Activated naive CD4-positive, alpha-beta T cell treated with anti-CD3 and anti-CD28 coated beads for 36 hours (primary cell): ENCODE measurements at regions of chr9 and their contacts with region 1.

Region 1: GRCh38 chr9:73132034-73132776 is 19.5 kb upstream of the ANXA1 start:
- DNase-seq: peak; percentile 76
- H3K4me3 Mint-ChIP-seq: peak overlapping the region; percentile 79
- H3K27ac Mint-ChIP-seq: peak overlapping the region; percentile 86
- H3K4me1 Mint-ChIP-seq: peaks cover 25% of the 10 kb centered on the region
- H3K27me3 Mint-ChIP-seq: no peaks in the 10 kb centered on the region

Region 2: GRCh38 chr9:72440992-72441847 is 691.0 kb before region 1 on chr9:
- CTCF ChIA-PET with region 1: no interaction called
- intact Hi-C with region 1: no loop called
- DNase-seq: no peak
- H3K4me3 Mint-ChIP-seq: no peak overlapping the region
- H3K27ac Mint-ChIP-seq: no peak overlapping the region
- H3K4me1 Mint-ChIP-seq: peaks cover 14% of the 10 kb centered on the region
- H3K27me3 Mint-ChIP-seq: no peaks in the 10 kb centered on the region

Region 3: DNA sequence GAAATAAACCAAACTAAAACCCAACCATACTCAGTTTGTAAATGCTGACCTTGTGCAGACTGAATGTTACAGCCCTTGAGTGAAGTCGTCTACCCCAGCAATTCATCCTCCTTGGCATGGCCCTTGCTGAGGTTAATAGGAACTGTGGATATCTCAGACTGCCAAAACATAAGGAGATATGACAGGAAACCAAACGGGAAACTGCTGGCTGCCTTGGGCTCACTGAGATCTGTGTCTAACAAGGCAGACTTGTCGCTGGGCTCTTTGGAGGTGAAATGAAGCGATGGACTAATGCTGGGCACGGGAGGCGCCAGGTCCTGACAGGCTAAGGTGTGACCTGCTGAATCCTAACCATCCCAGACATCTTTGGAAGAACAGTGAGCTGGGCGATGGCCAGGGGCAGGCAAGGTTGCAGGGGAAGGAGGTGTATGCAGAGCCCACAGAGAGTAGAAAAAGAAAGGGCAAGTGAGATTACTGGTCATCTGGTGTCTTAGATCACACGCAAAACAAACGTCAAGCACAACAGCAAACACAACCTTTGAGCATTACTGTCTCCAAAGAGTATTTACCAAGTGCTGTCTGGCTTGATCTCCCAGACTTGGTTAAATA is 134.7 kb before region 1 on chr9:
- CTCF ChIA-PET with region 1: no interaction called
- intact Hi-C with region 1: no loop called
- DNase-seq: no peak
- H3K4me3 Mint-ChIP-seq: no peak overlapping the region
- H3K27ac Mint-ChIP-seq: no peak overlapping the region
- H3K4me1 Mint-ChIP-seq: no peaks in the 10 kb centered on the region
- H3K27me3 Mint-ChIP-seq: peaks cover 18% of the 10 kb centered on the region

Region 4: GRCh38 chr9:73118898-73119554 is 13.2 kb before region 1 on chr9:
- CTCF ChIA-PET with region 1: interaction called, 3 read pairs
- intact Hi-C with region 1: loop called (anchors 1 kb)
- DNase-seq: no peak
- H3K4me3 Mint-ChIP-seq: no peak overlapping the region
- H3K27ac Mint-ChIP-seq: no peak overlapping the region
- H3K4me1 Mint-ChIP-seq: peaks cover 34% of the 10 kb centered on the region
- H3K27me3 Mint-ChIP-seq: no peaks in the 10 kb centered on the region

Region 5: DNA sequence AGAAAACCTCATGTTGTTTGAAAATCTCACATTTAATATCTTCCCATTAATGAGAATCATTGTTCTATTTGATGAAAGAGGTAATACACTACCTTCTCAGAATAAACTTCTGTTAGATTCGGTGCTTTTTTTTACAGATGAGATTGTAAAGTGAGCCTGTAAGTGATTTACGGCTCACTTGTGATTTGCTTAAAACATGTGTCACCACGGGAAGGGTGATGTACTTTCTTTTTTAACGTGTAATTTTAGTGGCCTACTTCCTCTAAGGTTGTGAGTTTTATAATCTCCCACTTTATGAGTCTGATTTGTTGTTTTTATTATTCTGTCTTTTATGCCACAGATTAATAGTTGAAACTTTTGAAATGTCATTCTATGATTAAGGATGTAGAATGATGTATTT is 35.4 kb after region 1 on chr9:
- CTCF ChIA-PET with region 1: interaction called, 3 read pairs
- intact Hi-C with region 1: loop called (anchors 5 kb)
- DNase-seq: no peak
- H3K4me3 Mint-ChIP-seq: peak overlapping the region; percentile 45
- H3K27ac Mint-ChIP-seq: peak overlapping the region; percentile 54
- H3K4me1 Mint-ChIP-seq: peaks cover 15% of the 10 kb centered on the region
- H3K27me3 Mint-ChIP-seq: no peaks in the 10 kb centered on the region

Region 6: DNA sequence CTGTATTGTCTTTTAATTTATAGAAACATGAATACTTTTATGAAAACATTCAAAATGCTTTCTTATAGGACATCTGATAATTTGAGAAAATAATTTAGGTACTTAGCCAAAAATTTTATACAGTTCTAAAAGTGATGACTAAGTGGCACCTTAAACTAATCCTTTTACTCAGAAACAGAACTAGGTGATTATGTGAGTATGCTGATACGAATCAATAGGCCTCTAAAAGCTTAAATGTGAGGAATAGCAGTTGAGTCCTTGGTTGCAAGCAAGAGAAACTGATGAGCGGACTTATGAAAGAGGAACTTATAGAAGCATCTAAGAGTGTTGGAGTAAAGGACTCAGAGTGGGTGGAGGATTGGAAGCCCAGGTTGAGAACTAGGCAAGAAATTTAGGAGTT is 45.8 kb after region 1 on chr9:
- CTCF ChIA-PET with region 1: interaction called, 4 read pairs
- intact Hi-C with region 1: loop called (anchors 1 kb)
- DNase-seq: no peak
- H3K4me3 Mint-ChIP-seq: no peak overlapping the region
- H3K27ac Mint-ChIP-seq: no peak overlapping the region
- H3K4me1 Mint-ChIP-seq: peaks cover 13% of the 10 kb centered on the region
- H3K27me3 Mint-ChIP-seq: no peaks in the 10 kb centered on the region

Region 7: DNA sequence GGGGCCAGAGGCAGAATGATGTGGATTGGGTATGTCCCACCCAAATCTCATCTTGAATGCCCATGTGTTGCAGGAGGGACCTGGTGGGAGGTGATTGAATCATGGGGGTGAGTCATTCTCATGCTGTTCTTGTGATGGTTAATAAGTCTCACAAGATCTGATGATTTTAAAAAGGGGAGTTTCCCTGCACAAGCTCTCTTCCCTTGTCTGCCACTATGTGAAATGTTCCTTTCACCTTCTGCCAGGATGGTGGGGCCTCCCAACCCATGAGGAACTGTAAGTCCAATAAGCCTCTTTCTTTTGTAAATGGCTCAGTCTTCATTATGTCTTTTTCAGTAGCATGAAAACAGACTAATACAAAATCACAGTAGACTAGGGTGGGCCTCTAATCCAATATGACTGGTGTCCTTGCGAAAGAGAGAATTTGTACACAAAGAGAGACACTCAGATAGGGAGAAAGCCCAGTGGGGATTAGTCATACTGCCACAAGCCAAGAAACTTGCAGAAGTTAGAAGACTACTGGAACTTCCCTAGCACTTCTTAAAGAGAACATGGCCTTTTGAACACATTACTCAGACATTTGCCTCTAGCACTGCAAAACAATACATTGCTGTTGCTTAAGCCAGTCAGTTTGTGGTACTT is 87.9 kb after region 1 on chr9:
- CTCF ChIA-PET with region 1: interaction called, 3 read pairs
- intact Hi-C with region 1: loop called (anchors 1 kb)
- DNase-seq: peak; percentile 61
- H3K4me3 Mint-ChIP-seq: no peak overlapping the region
- H3K27ac Mint-ChIP-seq: peak overlapping the region; percentile 91
- H3K4me1 Mint-ChIP-seq: peaks cover 27% of the 10 kb centered on the region
- H3K27me3 Mint-ChIP-seq: peaks cover 44% of the 10 kb centered on the region